IMR-90 (cell line): ENCODE measurements at regions of chr18 and their contacts with region 1.

Region 1: GRCh38 chr18:12327510-12328178 is 19.6 kb downstream of the TUBB6 start:
- DNase-seq: peak; percentile 69
- ATAC-seq: peak; percentile 68
- H3K4me3 ChIP-seq: no peak overlapping the region
- H3K27ac ChIP-seq: no peak overlapping the region
- H3K4me1 ChIP-seq: no peaks in the 10 kb centered on the region
- H3K27me3 ChIP-seq: no peaks in the 10 kb centered on the region
- CTCF ChIP-seq: peak; percentile 77
- POLR2A ChIP-seq: peak; percentile 61
- RAD21 ChIP-seq: peak; percentile 47

Region 2: GRCh38 chr18:12359515-12359927 is 31.9 kb after region 1 on chr18:
- CTCF ChIA-PET with region 1: no interaction called
- POLR2A ChIA-PET with region 1: no interaction called
- dilution Hi-C with region 1: no loop called
- in situ Hi-C with region 1: no loop called
- intact Hi-C with region 1: loop called (anchors 1 kb)
- DNase-seq: peak; percentile 62
- ATAC-seq: no peak
- H3K4me3 ChIP-seq: no peak overlapping the region
- H3K27ac ChIP-seq: no peak overlapping the region
- H3K4me1 ChIP-seq: no peaks in the 10 kb centered on the region
- H3K27me3 ChIP-seq: no peaks in the 10 kb centered on the region
- CTCF ChIP-seq: no peak
- POLR2A ChIP-seq: no peak
- RAD21 ChIP-seq: no peak

Region 3: GRCh38 chr18:12872408-12872807 is 544.8 kb after region 1 on chr18:
- CTCF ChIA-PET with region 1: no interaction called
- POLR2A ChIA-PET with region 1: no interaction called
- dilution Hi-C with region 1: no loop called
- in situ Hi-C with region 1: no loop called
- intact Hi-C with region 1: no loop called
- DNase-seq: no peak
- ATAC-seq: no peak
- H3K4me3 ChIP-seq: no peak overlapping the region
- H3K27ac ChIP-seq: no peak overlapping the region
- H3K4me1 ChIP-seq: no peaks in the 10 kb centered on the region
- H3K27me3 ChIP-seq: no peaks in the 10 kb centered on the region
- CTCF ChIP-seq: no peak
- POLR2A ChIP-seq: no peak
- RAD21 ChIP-seq: no peak